CD8-positive, alpha-beta T cell (primary cell): ENCODE measurements at regions of chr14 and their contacts with region 1.

Region 1: GRCh38 chr14:69766984-69767368 is at the start of gene SRSF5:
- DNase-seq: peak; percentile 86 to 97 (median 96)
- ATAC-seq: peak; percentile 80
- H3K4me3 ChIP-seq: peak within 1 kb of the TSS; percentile 78 to 88
- H3K4me3 Mint-ChIP-seq: peak within 1 kb of the TSS; percentile 99
- H3K27ac ChIP-seq: peak within 1 kb of the TSS; percentile 97 to 99
- H3K27ac Mint-ChIP-seq: peak within 1 kb of the TSS; percentile 100
- H3K4me1 ChIP-seq: peaks cover 50% of the 10 kb centered on the region
- H3K4me1 Mint-ChIP-seq: peaks cover 67% of the 10 kb centered on the region
- H3K27me3 ChIP-seq: no peaks in the 10 kb centered on the region
- H3K27me3 Mint-ChIP-seq: no peaks in the 10 kb centered on the region
- CTCF ChIP-seq: no peak
- total RNA-seq, gene SRSF5: 1,544 to 1,597 TPM

Region 2: GRCh38 chr14:69755784-69756183 is 11.2 kb before region 1 on chr14:
- CTCF ChIA-PET with region 1: interaction called, 3 read pairs
- POLR2A ChIA-PET with region 1: interaction called, 32 read pairs
- intact Hi-C with region 1: no loop called
- DNase-seq: no peak
- ATAC-seq: no peak
- H3K4me3 ChIP-seq: no peak overlapping the region
- H3K4me3 Mint-ChIP-seq: no peak overlapping the region
- H3K27ac ChIP-seq: no peak overlapping the region
- H3K27ac Mint-ChIP-seq: peak overlapping the region; percentile 46
- H3K4me1 ChIP-seq: peaks cover 14% of the 10 kb centered on the region
- H3K4me1 Mint-ChIP-seq: peaks cover 14% of the 10 kb centered on the region
- H3K27me3 ChIP-seq: no peaks in the 10 kb centered on the region
- H3K27me3 Mint-ChIP-seq: no peaks in the 10 kb centered on the region
- CTCF ChIP-seq: no peak

Region 3: DNA sequence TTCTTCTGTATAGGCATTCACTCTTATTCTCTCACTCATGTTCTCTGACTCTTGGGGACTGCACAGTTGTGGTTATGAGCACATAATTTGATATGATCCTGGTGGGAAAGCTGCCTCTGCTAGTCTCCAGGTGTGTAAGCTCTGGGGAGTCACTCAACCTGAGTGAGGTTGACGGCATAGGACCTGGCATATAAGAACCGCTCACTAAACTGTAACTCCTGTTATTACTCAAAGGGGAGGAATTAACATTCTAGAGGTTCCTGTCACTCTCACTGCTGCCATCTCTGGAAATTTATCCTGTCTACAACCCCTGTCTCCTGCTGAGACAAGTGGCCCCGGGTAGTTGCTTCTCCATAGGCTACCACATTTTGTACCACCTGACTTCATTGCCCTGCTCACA is 14.0 kb after region 1 on chr14:
- CTCF ChIA-PET with region 1: interaction called, 4 read pairs
- POLR2A ChIA-PET with region 1: interaction called, 15 read pairs
- intact Hi-C with region 1: loop called in 1 of 2 experiments (anchors 1 kb)
- DNase-seq: no peak
- ATAC-seq: no peak
- H3K4me3 ChIP-seq: no peak overlapping the region
- H3K4me3 Mint-ChIP-seq: no peak overlapping the region
- H3K27ac ChIP-seq: no peak overlapping the region
- H3K27ac Mint-ChIP-seq: peak overlapping the region; percentile 84
- H3K4me1 ChIP-seq: peaks cover 14% of the 10 kb centered on the region
- H3K4me1 Mint-ChIP-seq: peaks cover 49% of the 10 kb centered on the region
- H3K27me3 ChIP-seq: no peaks in the 10 kb centered on the region
- H3K27me3 Mint-ChIP-seq: no peaks in the 10 kb centered on the region
- CTCF ChIP-seq: no peak

Region 4: GRCh38 chr14:71130491-71131179 is 1363.7 kb after region 1 on chr14:
- CTCF ChIA-PET with region 1: no interaction called
- POLR2A ChIA-PET with region 1: no interaction called
- intact Hi-C with region 1: no loop called
- DNase-seq: peak in 1 of 9 experiments; percentile 15
- ATAC-seq: no peak
- H3K4me3 ChIP-seq: no peak overlapping the region
- H3K4me3 Mint-ChIP-seq: no peak overlapping the region
- H3K27ac ChIP-seq: no peak overlapping the region
- H3K27ac Mint-ChIP-seq: peak overlapping the region; percentile 2
- H3K4me1 ChIP-seq: no peaks in the 10 kb centered on the region
- H3K4me1 Mint-ChIP-seq: peaks cover 12% of the 10 kb centered on the region
- H3K27me3 ChIP-seq: no peaks in the 10 kb centered on the region
- H3K27me3 Mint-ChIP-seq: peaks cover 2% of the 10 kb centered on the region
- CTCF ChIP-seq: no peak